Ascending aorta (tissue), 2 donors: ENCODE measurements at regions of chr7 and their contacts with region 1.

Region 1: GRCh38 chr7:1569833-1570633 is at the start of gene PSMG3:
- DNase-seq: peak; percentile 46 to 94
- H3K4me3 ChIP-seq: peak within 1 kb of the TSS; percentile 83 to 91
- H3K27ac ChIP-seq: peak within 1 kb of the TSS; percentile 86 to 87
- H3K4me1 ChIP-seq: peaks cover 8 to 14% of the 10 kb centered on the region in 2 donors
- H3K27me3 ChIP-seq: no peaks in the 10 kb centered on the region
- CTCF ChIP-seq: peak; percentile 25 to 42 (median 35)
- total RNA-seq, gene PSMG3: 34.1 TPM

Region 2: DNA sequence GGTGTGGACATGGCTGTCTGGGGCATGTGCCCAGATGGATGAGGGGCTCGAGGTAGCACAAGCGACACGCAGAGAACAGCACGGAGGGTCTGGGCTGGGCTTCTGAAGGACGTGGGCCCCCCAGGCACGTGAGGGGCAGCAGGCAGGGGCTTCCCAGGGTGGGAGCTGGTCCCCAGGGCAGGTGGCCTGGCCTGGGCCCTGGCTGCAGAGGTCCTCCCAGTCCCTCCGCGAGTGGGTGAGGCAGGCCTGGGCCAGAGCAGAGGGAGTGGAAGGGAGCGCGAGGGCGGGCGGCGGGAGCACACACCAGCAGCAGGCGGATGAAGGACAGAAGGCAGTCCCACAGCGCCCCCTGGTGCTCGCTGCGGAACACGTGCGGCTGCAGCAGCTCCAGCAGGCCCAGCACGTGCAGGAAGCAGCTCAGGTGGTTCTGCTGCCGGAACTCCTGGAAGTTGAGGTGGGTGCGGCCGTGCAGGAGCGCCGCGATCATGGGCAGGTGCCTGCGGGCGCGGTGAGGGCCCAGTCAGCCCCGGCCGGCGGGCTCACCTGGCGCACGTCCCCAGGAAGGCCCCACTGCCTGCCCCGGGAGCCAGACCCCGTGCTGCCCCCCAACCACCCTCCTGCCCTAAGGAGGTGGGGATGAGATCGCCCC is 96.0 kb before region 1 on chr7:
- intact Hi-C with region 1: loop called (anchors 1 kb)
- DNase-seq: peak; percentile 47 to 85
- H3K4me3 ChIP-seq: no peak overlapping the region
- H3K27ac ChIP-seq: no peak overlapping the region
- H3K4me1 ChIP-seq: no peaks in the 10 kb centered on the region
- H3K27me3 ChIP-seq: no peaks in the 10 kb centered on the region
- CTCF ChIP-seq: peak; percentile 85 to 94 (median 91)

Region 3: GRCh38 chr7:1503816-1504775 is 65.9 kb before region 1 on chr7 and contains the start of gene INTS1:
- intact Hi-C with region 1: loop called (anchors 1 kb)
- DNase-seq: peak; percentile 42 to 93
- H3K4me3 ChIP-seq: peak within 1 kb of the TSS; percentile 79 to 93
- H3K27ac ChIP-seq: peak within 1 kb of the TSS; percentile 53 to 71
- H3K4me1 ChIP-seq: peaks cover 10% of the 10 kb centered on the region in 2 donors
- H3K27me3 ChIP-seq: no peaks in the 10 kb centered on the region
- CTCF ChIP-seq: peak; percentile 59 to 97 (median 71)
- total RNA-seq, gene INTS1: 80.7 TPM

Region 4: DNA sequence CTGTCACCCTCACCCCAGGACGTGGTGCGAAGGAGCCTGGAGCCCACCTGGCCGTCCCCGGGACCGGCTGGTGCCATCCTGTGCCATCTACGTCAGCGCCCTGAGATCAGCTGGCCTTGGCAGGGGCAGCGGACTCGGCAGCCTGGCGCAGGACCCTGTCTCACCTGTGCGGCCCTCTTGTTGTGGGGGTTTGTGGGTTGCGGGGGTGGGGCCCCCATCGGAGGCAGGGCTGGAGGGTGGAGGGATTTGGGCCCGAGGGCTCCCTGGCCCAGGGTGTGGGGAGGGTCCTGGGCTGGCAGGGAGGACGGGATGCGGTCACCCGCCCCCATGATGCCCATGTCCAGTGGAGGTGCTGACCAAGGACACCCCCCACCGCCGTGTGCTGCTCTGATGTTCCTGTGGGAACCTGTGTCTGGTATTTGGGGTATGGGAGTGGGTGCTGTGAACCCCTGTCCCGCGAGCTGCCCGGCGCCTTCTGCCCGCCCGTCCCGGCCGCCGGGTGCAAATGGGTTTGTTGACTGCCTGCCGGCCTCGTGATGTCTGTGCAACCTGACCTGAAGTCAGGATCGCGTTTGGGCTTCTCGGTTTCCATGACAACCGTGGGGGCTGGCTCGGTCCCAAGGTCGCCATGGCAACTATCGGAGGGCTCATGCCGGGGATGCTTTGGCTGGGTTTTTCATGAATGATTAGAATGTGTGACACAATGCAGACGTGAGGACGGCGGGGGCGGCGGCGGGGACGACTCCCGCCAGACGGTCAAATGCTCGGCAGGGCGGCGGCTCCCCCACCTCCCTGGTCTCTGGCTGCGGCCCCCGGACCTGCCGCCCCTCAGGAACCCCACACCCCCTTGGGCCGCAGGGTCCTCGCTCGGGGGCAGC is 32.3 kb before region 1 on chr7:
- intact Hi-C with region 1: loop called (anchors 2 kb)
- DNase-seq: peak; percentile 90 to 99
- H3K4me3 ChIP-seq: peak overlapping the region; percentile 57 to 77
- H3K27ac ChIP-seq: peak overlapping the region; percentile 98 to 99
- H3K4me1 ChIP-seq: peaks cover 17 to 51% of the 10 kb centered on the region in 2 donors
- H3K27me3 ChIP-seq: no peaks in the 10 kb centered on the region
- CTCF ChIP-seq: no peak

Region 5: GRCh38 chr7:2232766-2233520 is 662.9 kb after region 1 on chr7 and contains the start of gene MAD1L1:
- intact Hi-C with region 1: loop called (anchors 5 kb)
- DNase-seq: peak; percentile 45 to 92
- H3K4me3 ChIP-seq: peak within 1 kb of the TSS; percentile 81 to 87
- H3K27ac ChIP-seq: peak within 1 kb of the TSS; percentile 39 to 46
- H3K4me1 ChIP-seq: peaks cover 2 to 17% of the 10 kb centered on the region in 2 donors
- H3K27me3 ChIP-seq: no peaks in the 10 kb centered on the region
- CTCF ChIP-seq: no peak
- total RNA-seq, gene MAD1L1: 59.6 TPM